ENCODE measurements at regions of chr14 and their contacts with region 1.

Region 1: GRCh38 chr14:35341446-35342159 is 49.4 kb downstream of the PSMA6 start:
- DNase-seq: peak; percentile 95
- ATAC-seq: peak; percentile 85 to 96 (median 90)
- H3K4me3 ChIP-seq: peak overlapping the region in 9 of 10 donors; percentile 1 to 44 (median 38)
- H3K27ac ChIP-seq: peak overlapping the region; percentile 86 to 98 (median 95)
- H3K4me1 ChIP-seq: peaks cover 20 to 78% (median 52%) of the 10 kb centered on the region in 9 donors
- H3K27me3 ChIP-seq: no peaks in the 10 kb centered on the region
- CTCF ChIP-seq: no peak

Region 2: DNA sequence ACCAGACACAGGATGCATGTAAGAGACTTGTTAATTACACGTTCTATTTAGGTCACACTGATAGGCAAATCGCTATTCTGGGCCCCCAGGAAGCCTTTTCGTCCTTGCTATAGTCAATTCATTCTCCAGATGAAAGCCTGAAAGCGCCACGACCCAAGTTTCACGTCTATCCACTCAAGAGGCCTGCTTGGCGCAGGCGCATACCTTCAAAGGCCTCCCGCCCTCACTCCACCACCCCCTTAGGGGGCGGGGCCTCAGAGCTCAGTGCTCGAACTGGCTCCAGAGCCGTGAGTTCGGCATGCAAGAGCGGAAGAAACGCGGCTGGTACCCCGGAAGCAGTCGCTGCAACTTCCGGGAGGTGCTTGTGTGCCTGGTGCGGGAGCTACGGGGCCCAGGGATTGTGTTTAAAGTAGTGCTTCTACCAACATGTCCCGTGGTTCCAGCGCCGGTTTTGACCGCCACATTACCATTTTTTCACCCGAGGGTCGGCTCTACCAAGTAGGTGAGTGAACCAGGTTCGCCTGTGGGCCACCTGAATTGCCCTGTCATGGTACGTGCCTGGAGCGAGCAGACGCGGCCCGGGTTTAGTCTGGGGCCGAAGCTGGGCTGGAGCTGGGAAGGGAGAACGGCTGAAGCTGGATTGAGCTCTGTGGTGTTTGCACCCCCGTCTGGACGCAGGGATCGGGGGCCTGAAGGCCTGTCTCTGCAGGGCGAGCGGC is 49.4 kb before region 1 on chr14 and contains the start of gene PSMA6:
- intact Hi-C with region 1: loop called in 4 of 10 experiments (anchors 5 kb)
- DNase-seq: peak; percentile 98
- ATAC-seq: peak; percentile 99 to 100 (median 100)
- H3K4me3 ChIP-seq: peak within 1 kb of the TSS; percentile 59 to 95 (median 86)
- H3K27ac ChIP-seq: peak within 1 kb of the TSS; percentile 77 to 95 (median 92)
- H3K4me1 ChIP-seq: peaks cover 4 to 65% (median 43%) of the 10 kb centered on the region in 9 donors
- H3K27me3 ChIP-seq: no peaks in the 10 kb centered on the region
- CTCF ChIP-seq: no peak
- total RNA-seq, gene PSMA6: 150 to 228 (median 166) TPM

Region 3: DNA sequence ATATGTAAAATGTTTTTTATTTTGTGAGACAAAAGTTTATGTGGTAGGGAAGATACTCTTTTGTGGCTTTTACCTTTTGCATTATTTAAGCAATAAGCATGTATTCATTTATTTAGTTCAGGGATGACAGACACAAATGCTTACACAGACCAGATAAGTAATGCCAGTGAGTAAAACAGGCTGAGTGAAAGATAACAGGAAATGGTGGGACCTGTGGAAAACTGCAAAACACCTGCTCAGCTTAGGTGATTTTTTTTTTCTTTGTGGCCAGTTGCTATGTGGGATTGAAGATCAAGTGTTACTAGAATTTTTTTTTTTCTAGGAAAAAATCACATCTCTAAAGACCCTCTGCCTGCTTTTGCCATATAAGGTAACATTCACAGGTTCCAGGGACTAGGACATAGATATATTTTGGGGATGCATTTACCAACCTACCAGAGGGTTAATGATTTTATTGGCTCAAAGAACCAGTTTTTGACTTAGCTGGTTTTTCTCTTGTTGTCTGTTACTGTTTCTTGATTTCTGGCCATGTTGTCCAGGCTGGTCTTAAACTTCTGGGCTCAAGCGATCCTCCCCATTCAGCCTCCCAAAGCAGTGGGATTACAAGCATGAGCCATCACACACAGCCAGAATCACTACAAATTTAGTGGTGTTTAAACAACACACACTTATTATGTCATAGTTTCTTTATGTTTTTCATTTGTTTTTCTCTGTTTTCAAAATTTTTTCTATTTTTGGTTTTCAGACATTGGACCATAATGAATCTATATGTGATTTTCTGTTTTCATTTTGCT is 39.7 kb before region 1 on chr14:
- intact Hi-C with region 1: loop called in 1 of 10 experiments (anchors 5 kb)
- DNase-seq: no peak
- ATAC-seq: no peak
- H3K4me3 ChIP-seq: no peak overlapping the region
- H3K27ac ChIP-seq: peak overlapping the region in 2 of 10 donors; percentile 35 to 39
- H3K4me1 ChIP-seq: peaks cover 0 to 79% (median 37%) of the 10 kb centered on the region in 9 donors
- H3K27me3 ChIP-seq: no peaks in the 10 kb centered on the region
- CTCF ChIP-seq: no peak

Region 4: GRCh38 chr14:35369701-35370191 is 28.1 kb after region 1 on chr14:
- intact Hi-C with region 1: loop called in 1 of 10 experiments (anchors 2 kb)
- DNase-seq: no peak
- ATAC-seq: peak in 4 of 8 donors; percentile 11 to 40 (median 34)
- H3K4me3 ChIP-seq: no peak overlapping the region
- H3K27ac ChIP-seq: peak overlapping the region in 2 of 10 donors; percentile 1 to 53
- H3K4me1 ChIP-seq: peaks cover 4 to 66% (median 25%) of the 10 kb centered on the region in 9 donors
- H3K27me3 ChIP-seq: no peaks in the 10 kb centered on the region
- CTCF ChIP-seq: no peak

Region 5: GRCh38 chr14:35385042-35385839 is 43.6 kb after region 1 on chr14:
- intact Hi-C with region 1: loop called in 4 of 10 experiments (anchors 2 to 10 kb)
- DNase-seq: peak; percentile 84 to 88
- ATAC-seq: peak; percentile 91 to 96 (median 94)
- H3K4me3 ChIP-seq: no peak overlapping the region
- H3K27ac ChIP-seq: peak overlapping the region; percentile 73 to 90 (median 86)
- H3K4me1 ChIP-seq: peaks cover 18 to 39% (median 30%) of the 10 kb centered on the region in 9 donors
- H3K27me3 ChIP-seq: no peaks in the 10 kb centered on the region
- CTCF ChIP-seq: no peak

Region 6: DNA sequence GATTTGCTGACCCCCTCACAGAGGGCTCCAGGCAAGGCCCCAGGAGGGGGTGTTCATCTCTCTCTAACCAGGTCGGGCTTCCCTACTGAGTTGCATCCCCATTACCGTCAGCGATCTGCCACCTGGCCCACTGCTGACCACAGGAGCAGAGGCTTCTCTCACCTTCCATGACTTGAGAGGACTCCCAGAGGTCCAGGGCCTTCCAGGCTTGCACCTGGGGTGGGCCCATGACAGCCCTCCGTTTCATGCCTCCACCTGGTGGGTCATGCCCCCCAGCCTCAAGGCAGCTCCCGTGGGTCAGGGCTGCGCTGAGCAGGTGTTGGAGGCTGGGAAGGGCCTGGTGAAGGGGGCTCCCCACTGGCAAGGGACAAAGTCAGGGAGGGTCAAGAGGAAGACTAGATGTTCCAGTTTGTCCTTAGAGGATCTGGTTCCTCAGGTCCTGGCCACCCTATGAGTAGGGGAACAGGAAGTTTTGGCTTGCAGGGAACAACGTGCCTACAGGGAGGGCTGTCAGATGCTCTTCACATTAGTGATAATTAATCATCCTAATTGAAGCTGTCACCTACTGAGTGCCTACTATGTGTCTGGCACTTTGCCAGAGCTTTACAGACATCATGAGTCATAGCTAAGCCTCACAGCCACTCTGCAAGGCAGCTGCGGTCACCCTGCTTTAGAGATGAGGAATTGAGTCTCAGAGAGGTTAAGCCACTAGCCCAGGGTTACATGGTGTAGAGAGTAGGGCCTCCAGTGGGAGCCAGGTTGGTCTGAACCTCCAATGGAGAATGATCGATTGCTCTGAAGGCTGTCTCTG is 49.2 kb after region 1 on chr14:
- intact Hi-C with region 1: loop called in 4 of 10 experiments (anchors 2 to 10 kb)
- DNase-seq: no peak
- ATAC-seq: peak in 1 of 8 donors; percentile 11
- H3K4me3 ChIP-seq: no peak overlapping the region
- H3K27ac ChIP-seq: no peak overlapping the region
- H3K4me1 ChIP-seq: peaks cover 4 to 29% (median 8%) of the 10 kb centered on the region in 9 donors
- H3K27me3 ChIP-seq: no peaks in the 10 kb centered on the region
- CTCF ChIP-seq: no peak

Region 7: DNA sequence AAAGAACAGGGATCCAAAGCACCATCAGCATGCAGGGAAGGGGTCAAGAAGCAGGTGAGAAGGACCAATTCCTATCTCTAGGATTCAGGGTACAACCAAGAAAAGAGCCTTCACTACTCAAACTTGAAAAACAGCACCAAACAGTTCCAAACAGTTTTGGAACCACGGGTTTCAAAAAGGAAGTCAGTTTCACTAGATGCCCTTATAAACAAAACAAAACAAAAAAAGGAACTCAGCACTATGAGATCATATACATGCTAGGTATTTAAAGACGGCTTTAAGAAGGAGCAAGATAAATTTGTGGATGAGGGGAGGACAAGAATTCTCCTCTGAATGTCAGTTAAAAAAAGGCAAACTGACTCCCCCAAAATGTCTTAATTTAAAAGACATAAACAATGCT is 198.4 kb after region 1 on chr14:
- intact Hi-C with region 1: no loop called
- DNase-seq: no peak
- ATAC-seq: no peak
- H3K4me3 ChIP-seq: no peak overlapping the region
- H3K27ac ChIP-seq: no peak overlapping the region
- H3K4me1 ChIP-seq: peaks cover 0 to 8% (median 7%) of the 10 kb centered on the region in 9 donors
- H3K27me3 ChIP-seq: peaks cover 0 to 17% (median 13%) of the 10 kb centered on the region in 7 donors
- CTCF ChIP-seq: no peak

Region 8: GRCh38 chr14:35741345-35742031 is 399.9 kb after region 1 on chr14:
- intact Hi-C with region 1: no loop called
- DNase-seq: no peak
- ATAC-seq: no peak
- H3K4me3 ChIP-seq: no peak overlapping the region
- H3K27ac ChIP-seq: no peak overlapping the region
- H3K4me1 ChIP-seq: no peaks in the 10 kb centered on the region
- H3K27me3 ChIP-seq: no peaks in the 10 kb centered on the region
- CTCF ChIP-seq: no peak

Measured in heart right ventricle (tissue), 16 donors.